ENCODE measurements at regions of chr10 and their contacts with region 1.

Region 1: DNA sequence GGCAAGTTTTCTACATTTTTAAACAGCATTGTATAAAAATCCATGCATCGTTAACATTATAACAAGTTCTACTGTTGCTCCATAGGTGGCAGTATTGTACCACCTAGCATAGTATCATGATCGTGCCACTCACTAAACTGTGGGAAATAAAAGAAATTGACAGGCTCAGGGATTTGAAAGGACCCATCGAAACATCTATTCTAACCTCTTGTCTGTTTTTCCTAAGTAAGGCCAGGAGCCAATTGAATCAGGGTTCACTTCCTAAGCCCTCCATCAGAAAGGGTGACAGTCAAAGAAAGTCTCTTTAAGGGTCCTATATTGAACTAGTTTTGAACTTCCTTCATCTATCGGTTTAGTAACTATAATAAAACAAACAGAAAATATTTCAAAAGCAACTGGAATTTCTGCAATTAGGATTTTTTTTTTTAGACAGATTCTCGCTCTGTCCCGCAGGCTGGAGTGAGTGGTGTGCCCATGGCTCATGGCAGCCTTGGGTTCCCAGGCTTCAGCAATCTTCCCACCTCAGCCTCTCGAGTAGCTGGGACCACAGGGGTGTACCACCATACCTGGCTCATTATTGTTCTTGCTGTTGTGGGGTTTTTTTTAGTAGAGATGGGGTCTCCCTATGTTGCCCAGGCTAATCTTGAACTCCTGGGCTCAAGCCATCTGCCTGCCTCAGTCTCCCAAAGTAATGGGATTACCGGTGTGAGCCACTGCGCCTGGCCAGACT is 9.4 kb downstream of the HACD1 start:
- DNase-seq: peak; percentile 46
- ATAC-seq: peak; percentile 87
- H3K4me3 Mint-ChIP-seq: no peak overlapping the region
- H3K27ac Mint-ChIP-seq: no peak overlapping the region
- H3K4me1 Mint-ChIP-seq: peaks cover 2% of the 10 kb centered on the region
- H3K27me3 Mint-ChIP-seq: no peaks in the 10 kb centered on the region

Region 2: GRCh38 chr10:17586821-17587234 is 20.9 kb before region 1 on chr10:
- CTCF ChIA-PET with region 1: no interaction called
- POLR2A ChIA-PET with region 1: no interaction called
- DNase-seq: no peak
- ATAC-seq: no peak
- H3K4me3 Mint-ChIP-seq: no peak overlapping the region
- H3K27ac Mint-ChIP-seq: no peak overlapping the region
- H3K4me1 Mint-ChIP-seq: peaks cover 7% of the 10 kb centered on the region
- H3K27me3 Mint-ChIP-seq: peaks cover 6% of the 10 kb centered on the region

Region 3: DNA sequence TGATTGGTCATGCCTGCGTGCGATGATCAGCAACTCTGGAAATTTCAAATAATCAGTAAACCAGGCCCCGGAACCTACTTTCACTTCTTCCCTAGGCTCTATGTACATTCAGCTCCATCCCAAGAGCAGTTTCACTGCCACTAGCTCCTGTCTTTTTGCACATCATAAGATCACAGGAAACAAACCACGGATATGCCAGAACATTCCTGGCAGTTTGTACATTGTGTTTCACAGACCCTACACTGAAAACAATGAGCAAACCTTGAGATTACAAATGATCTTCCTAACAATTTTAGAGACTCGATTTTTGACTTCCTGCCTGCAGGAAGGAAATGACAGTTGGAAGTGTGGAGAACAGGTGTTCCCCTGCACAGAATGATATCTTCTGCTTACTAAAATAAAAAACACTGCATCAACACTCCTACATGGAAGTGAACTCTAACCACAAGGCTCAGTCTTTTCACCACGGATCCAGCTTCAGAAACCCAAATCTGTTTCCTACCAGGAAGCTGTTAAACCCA is 136.6 kb after region 1 on chr10:
- CTCF ChIA-PET with region 1: interaction called, 12 read pairs
- POLR2A ChIA-PET with region 1: no interaction called
- DNase-seq: no peak
- ATAC-seq: no peak
- H3K4me3 Mint-ChIP-seq: no peak overlapping the region
- H3K27ac Mint-ChIP-seq: peak overlapping the region; percentile 2
- H3K4me1 Mint-ChIP-seq: peaks cover 14% of the 10 kb centered on the region
- H3K27me3 Mint-ChIP-seq: no peaks in the 10 kb centered on the region

Region 4: GRCh38 chr10:17905491-17905890 is 297.7 kb after region 1 on chr10:
- CTCF ChIA-PET with region 1: no interaction called
- POLR2A ChIA-PET with region 1: no interaction called
- DNase-seq: no peak
- ATAC-seq: no peak
- H3K4me3 Mint-ChIP-seq: no peak overlapping the region
- H3K27ac Mint-ChIP-seq: no peak overlapping the region
- H3K4me1 Mint-ChIP-seq: no peaks in the 10 kb centered on the region
- H3K27me3 Mint-ChIP-seq: no peaks in the 10 kb centered on the region

Measured in activated CD8-positive, alpha-beta T cell treated with anti-CD3 and anti-CD28 coated beads, Interleukin-2, amount 10 ng/mL, durations not matched to agents 7 days and 5 days (primary cell).